ENCODE measurements at regions of chr10 and their contacts with region 1.

Region 1: GRCh38 chr10:119250641-119251314 is 43.4 kb downstream of the GRK5 start:
- DNase-seq: no peak
- H3K4me3 ChIP-seq: no peak overlapping the region
- H3K27ac ChIP-seq: peak overlapping the region; percentile 84 to 95
- H3K4me1 ChIP-seq: peaks cover 0 to 8% of the 10 kb centered on the region in 2 donors
- H3K27me3 ChIP-seq: no peaks in the 10 kb centered on the region
- CTCF ChIP-seq: no peak
- POLR2A ChIP-seq: no peak

Region 2: DNA sequence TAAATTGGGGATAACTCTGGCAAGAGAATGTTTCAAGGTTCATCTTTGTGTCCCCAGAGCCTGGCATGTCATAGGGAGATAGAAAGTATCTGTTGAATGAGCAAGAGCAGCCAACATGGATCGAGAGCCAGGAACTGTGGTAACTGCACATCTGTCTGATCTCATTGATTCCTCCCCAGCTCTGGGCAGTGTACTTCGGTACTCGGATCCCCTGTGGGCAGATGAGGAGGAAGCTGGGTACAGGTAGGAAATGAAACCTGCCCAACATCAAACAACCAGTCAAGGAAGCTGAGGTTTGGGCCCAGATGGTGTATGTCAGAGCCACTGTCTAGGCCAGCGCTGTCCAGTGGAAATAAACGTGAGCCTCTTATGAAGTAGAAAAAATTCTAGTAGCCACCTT is 33.0 kb after region 1 on chr10:
- intact Hi-C with region 1: loop called (anchors 2 kb)
- DNase-seq: peak in 1 of 2 donors; percentile 64
- H3K4me3 ChIP-seq: no peak overlapping the region
- H3K27ac ChIP-seq: peak overlapping the region; percentile 42 to 45
- H3K4me1 ChIP-seq: peaks cover 18 to 24% of the 10 kb centered on the region in 2 donors
- H3K27me3 ChIP-seq: no peaks in the 10 kb centered on the region
- CTCF ChIP-seq: no peak
- POLR2A ChIP-seq: no peak

Measured in breast epithelium (tissue), 4 donors.